ENCODE measurements at regions of chr1 and their contacts with region 1.

Region 1: DNA sequence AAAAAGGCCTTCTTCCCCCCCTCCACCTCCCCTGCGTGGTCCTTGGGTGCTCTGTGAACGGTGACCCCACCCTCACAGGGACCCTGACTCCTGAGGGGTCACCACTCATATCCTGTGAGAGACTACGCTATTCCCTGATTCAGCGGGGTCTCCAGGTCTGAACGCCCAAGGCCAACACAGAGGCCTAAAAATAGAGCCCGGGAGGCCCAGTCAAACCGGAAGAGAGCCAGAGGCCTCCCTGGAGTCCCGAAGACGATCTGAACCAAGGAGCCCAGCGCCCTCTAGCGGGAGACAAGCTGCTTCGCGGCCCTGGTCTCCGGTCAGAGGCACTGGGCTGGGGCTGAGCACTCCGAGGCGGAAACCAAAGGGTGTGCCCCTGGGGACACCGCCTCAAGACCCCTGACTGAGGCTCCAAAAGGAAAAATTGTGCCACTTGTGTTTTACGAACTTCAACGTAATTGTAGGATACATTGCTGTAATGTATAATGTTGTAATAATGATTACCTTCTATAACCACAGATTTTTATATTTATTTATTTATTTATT is 42.4 kb upstream of the PSEN2 start:
- DNase-seq: peak; percentile 97
- H3K4me3 ChIP-seq: peak overlapping the region; percentile 42
- H3K27ac ChIP-seq: peak overlapping the region; percentile 58
- H3K4me1 ChIP-seq: peaks cover 43% of the 10 kb centered on the region
- CTCF ChIP-seq: peak; percentile 95

Region 2: DNA sequence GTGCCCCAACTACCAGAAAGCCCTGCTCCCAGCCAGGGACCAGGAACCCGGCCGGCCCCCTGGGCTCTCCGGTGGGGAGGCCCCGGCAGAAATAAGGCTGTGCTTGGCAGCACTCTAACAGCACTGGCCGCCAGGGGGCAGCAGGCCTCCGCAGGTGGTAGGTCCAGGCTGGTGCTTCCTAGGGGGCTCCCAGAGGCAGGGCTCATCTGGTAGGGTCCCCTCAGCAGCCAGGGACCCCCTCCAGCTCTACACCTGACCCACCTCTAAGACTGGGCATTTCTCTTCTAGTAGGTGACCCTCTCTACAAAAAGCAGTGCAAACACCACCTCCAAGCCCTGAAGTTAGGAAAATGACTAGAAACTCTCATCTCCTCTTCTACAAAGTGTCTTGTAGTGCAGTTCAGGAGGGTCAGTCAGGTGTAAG is 193.9 kb before region 1 on chr1:
- CTCF ChIA-PET with region 1: interaction called, 3 read pairs
- POLR2A ChIA-PET with region 1: interaction called, 5 read pairs
- intact Hi-C with region 1: loop called (anchors 1 kb)
- DNase-seq: peak; percentile 81
- H3K4me3 ChIP-seq: no peak overlapping the region
- H3K27ac ChIP-seq: no peak overlapping the region
- H3K4me1 ChIP-seq: peaks cover 58% of the 10 kb centered on the region
- CTCF ChIP-seq: peak; percentile 98

Region 3: GRCh38 chr1:226649780-226650179 is 178.3 kb before region 1 on chr1:
- CTCF ChIA-PET with region 1: no interaction called
- POLR2A ChIA-PET with region 1: no interaction called
- intact Hi-C with region 1: loop called (anchors 1 kb)
- DNase-seq: peak; percentile 66
- H3K4me3 ChIP-seq: no peak overlapping the region
- H3K27ac ChIP-seq: peak overlapping the region; percentile 66
- H3K4me1 ChIP-seq: peaks cover 10% of the 10 kb centered on the region
- CTCF ChIP-seq: peak; percentile 82

Region 4: DNA sequence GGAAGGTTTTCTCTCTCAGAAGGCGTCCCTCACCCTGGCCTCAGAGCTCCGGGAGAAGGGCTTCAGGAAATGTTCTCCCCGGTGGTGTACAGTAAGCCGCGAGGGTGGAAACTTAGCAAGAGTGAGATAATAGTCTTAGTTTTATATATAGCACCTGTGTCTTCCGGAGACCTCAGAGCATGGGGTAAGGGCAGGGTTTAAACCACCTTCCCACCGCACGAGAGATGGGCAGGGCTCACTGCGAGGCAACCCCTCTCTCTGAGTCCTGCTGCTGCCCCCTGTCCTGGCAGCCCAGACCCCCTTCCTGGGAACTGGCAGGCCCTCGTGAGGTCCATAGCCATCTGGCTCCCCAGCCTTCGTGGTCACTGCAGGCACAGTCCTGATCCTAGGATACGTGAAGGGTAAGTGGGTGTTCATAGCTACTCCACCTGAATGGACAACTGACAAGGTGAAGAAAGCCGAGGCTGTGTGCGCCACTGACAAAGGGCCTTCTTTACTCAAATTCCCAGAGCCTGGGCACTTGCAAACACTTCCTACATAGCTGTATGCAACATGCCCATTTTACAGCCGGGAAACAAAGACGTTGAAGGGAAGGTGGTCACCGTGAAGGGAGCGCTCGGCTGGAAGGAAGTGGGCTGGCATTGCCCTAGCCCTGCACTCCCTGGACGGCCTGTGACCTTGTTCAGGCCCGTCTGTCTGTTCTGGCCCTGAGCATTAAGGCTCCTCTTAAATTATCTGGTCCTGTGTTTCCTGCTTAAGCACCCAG is 115.9 kb before region 1 on chr1:
- CTCF ChIA-PET with region 1: interaction called, 5 read pairs
- POLR2A ChIA-PET with region 1: no interaction called
- intact Hi-C with region 1: loop called (anchors 1 kb)
- DNase-seq: peak; percentile 86
- H3K4me3 ChIP-seq: peak overlapping the region; percentile 62
- H3K27ac ChIP-seq: peak overlapping the region; percentile 99
- H3K4me1 ChIP-seq: peaks cover 92% of the 10 kb centered on the region
- CTCF ChIP-seq: no peak

Region 5: DNA sequence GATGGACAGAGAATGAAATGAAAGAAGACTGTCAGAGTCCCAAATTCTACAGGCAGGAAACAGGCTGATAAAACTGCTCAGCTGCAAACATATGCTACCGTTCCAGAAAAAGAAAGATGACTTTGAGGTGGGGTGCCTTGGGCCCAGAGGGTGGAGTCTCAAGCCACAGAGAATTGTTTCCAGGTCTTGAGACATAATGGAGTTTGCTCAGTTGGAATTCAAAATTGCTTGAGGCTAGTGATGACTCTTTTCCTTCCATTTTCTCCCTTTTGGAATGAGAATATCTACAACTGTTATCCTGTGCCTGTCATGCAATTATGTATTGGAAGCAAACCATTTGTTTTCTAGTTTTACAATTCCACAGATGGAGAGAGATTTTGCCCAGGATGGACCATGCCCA is 18.8 kb after region 1 on chr1:
- CTCF ChIA-PET with region 1: no interaction called
- POLR2A ChIA-PET with region 1: no interaction called
- intact Hi-C with region 1: no loop called
- DNase-seq: no peak
- H3K4me3 ChIP-seq: no peak overlapping the region
- H3K27ac ChIP-seq: no peak overlapping the region
- H3K4me1 ChIP-seq: peaks cover 4% of the 10 kb centered on the region
- CTCF ChIP-seq: no peak

Region 6: DNA sequence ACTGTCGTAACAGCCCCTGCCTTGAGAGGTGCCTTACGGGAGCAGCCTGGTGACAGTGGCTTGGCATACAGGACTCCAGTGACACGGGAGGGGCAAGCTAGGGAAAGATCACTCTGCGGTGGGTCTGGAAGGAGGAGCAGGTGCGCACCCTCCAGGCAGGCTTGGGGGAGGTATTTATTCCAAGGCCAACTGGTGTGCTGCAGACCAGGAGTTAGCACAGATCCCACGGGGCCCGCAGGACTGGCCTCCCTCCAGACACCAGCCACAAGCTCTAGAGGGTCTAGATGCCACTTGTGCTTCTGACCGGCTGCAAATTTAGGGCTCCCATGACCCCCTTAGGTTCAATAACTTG is 64.5 kb after region 1 on chr1:
- CTCF ChIA-PET with region 1: no interaction called
- POLR2A ChIA-PET with region 1: no interaction called
- intact Hi-C with region 1: no loop called
- DNase-seq: no peak
- H3K4me3 ChIP-seq: no peak overlapping the region
- H3K27ac ChIP-seq: no peak overlapping the region
- H3K4me1 ChIP-seq: peaks cover 4% of the 10 kb centered on the region
- CTCF ChIP-seq: no peak

Region 7: GRCh38 chr1:226964068-226964425 is 136.0 kb after region 1 on chr1:
- CTCF ChIA-PET with region 1: no interaction called
- POLR2A ChIA-PET with region 1: no interaction called
- intact Hi-C with region 1: no loop called
- DNase-seq: no peak
- H3K4me3 ChIP-seq: no peak overlapping the region
- H3K27ac ChIP-seq: no peak overlapping the region
- H3K4me1 ChIP-seq: peaks cover 3% of the 10 kb centered on the region
- CTCF ChIP-seq: no peak